CD4-positive, alpha-beta T cell (primary cell): ENCODE measurements at regions of chr1 and their contacts with region 1.

Region 1: DNA sequence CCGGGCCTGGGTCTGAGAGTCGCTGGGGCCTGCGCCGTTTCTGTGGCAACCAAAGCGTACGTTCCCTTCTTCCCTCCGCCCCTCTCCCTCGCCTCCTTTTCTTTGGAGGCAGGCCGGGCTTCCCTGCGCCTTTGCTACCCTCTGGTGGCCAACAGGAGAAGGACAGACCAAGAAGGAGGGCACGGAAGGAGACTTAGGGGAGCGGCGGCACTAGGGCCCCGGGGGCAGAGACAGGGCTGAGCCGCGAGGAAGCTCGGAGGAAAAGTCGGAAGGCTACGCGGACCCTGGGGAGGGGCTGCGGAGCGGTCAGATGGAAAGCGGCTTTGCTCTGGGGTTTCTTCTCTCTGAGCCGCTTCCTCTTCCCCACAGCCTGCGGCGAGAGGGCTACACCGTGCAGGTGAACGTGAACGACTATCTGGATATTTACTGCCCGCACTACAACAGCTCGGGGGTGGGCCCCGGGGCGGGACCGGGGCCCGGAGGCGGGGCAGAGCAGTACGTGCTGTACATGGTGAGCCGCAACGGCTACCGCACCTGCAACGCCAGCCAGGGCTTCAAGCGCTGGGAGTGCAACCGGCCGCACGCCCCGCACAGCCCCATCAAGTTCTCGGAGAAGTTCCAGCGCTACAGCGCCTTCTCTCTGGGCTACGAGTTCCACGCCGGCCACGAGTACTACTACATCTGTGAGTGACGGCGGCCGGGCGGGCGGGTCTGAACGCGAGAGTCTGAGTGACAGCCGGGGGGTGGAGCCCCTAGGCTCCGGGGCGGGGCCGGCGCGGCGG is 6.3 kb downstream of the EFNA3 start:
- DNase-seq: peak; percentile 80 to 95 (median 88)
- ATAC-seq: peak; percentile 75
- H3K4me3 ChIP-seq: peak overlapping the region; percentile 92
- H3K4me3 Mint-ChIP-seq: peak overlapping the region; percentile 89
- H3K27ac ChIP-seq: peak overlapping the region; percentile 65 to 68
- H3K27ac Mint-ChIP-seq: peak overlapping the region; percentile 82
- H3K4me1 ChIP-seq: peaks cover 67% of the 10 kb centered on the region
- H3K4me1 Mint-ChIP-seq: peaks cover 51% of the 10 kb centered on the region
- H3K27me3 ChIP-seq: peaks cover 41 to 46% of the 10 kb centered on the region in 2 experiments
- H3K27me3 Mint-ChIP-seq: peaks cover 36% of the 10 kb centered on the region
- CTCF ChIP-seq: peak; percentile 76

Region 2: DNA sequence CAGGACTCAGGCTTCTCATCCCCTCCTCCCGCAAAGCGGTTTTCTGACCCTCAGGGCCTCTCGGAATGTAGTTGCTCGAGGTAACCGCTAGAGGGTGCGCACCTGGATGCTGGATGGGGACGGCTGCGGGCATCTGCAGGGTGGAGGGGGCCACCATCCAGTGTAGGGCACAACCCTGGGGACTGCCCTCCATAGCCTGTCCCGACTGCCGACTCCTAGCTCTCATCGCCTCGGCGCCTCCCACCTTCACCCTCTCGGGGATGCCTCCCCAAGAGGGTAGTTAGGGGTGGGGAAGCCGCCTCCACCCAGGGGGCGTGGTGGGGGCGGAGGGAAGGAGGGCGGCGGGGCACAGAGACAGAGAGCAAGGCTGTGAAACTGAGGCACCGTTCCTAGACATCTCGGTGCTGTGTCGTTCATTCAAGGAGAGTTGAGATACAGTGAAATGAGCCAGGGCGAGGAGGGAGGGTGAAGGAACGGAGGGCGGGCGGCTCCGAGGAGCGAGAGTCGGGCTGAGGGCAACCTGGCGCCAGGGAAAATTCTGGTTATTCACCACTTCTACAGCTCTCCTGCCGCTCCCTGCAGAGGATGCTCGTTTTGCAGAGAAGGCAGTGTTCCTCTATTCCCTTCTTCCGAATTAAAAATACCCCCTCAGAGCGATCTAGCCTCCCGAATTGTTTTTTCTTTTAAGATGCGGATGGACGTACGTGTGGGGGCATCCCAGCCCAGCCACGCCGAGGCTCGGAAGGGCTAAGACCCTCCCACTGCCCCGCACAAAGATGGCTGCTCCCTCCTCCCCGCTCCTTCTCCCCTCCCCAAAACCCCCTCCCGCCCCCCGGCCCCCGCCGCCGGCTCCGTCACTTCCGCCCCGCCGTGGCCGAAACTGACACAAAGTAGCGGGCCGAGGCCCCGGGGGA is 760.0 kb before region 1 on chr1 and contains the start of gene ATP8B2:
- CTCF ChIA-PET with region 1: no interaction called
- POLR2A ChIA-PET with region 1: no interaction called
- intact Hi-C with region 1: loop called in 1 of 2 experiments (anchors 10 kb)
- DNase-seq: peak; percentile 68 to 90 (median 74)
- ATAC-seq: peak; percentile 57
- H3K4me3 ChIP-seq: peak within 1 kb of the TSS; percentile 70
- H3K4me3 Mint-ChIP-seq: peak within 1 kb of the TSS; percentile 94
- H3K27ac ChIP-seq: peak within 1 kb of the TSS; percentile 80 to 86
- H3K27ac Mint-ChIP-seq: peak within 1 kb of the TSS; percentile 90
- H3K4me1 ChIP-seq: peaks cover 52% of the 10 kb centered on the region
- H3K4me1 Mint-ChIP-seq: peaks cover 36% of the 10 kb centered on the region
- H3K27me3 ChIP-seq: no peaks in the 10 kb centered on the region
- H3K27me3 Mint-ChIP-seq: no peaks in the 10 kb centered on the region
- CTCF ChIP-seq: peak; percentile 95
- total RNA-seq, gene ATP8B2: 72.7 to 80.7 TPM

Region 3: GRCh38 chr1:154558575-154559465 is 526.1 kb before region 1 on chr1 and contains the start of gene UBE2Q1:
- CTCF ChIA-PET with region 1: interaction called, 6 read pairs
- POLR2A ChIA-PET with region 1: interaction called, 3 read pairs
- intact Hi-C with region 1: loop called (anchors 2 to 10 kb)
- DNase-seq: peak; percentile 99 to 100 (median 99)
- ATAC-seq: peak; percentile 87
- H3K4me3 ChIP-seq: peak within 1 kb of the TSS; percentile 87
- H3K4me3 Mint-ChIP-seq: peak within 1 kb of the TSS; percentile 91
- H3K27ac ChIP-seq: peak within 1 kb of the TSS; percentile 64 to 84
- H3K27ac Mint-ChIP-seq: peak within 1 kb of the TSS; percentile 83
- H3K4me1 ChIP-seq: peaks cover 46% of the 10 kb centered on the region
- H3K4me1 Mint-ChIP-seq: peaks cover 42% of the 10 kb centered on the region
- H3K27me3 ChIP-seq: no peaks in the 10 kb centered on the region
- H3K27me3 Mint-ChIP-seq: no peaks in the 10 kb centered on the region
- CTCF ChIP-seq: no peak
- total RNA-seq, gene UBE2Q1: 78.7 to 82.3 TPM

Region 4: GRCh38 chr1:155017041-155017945 is 67.6 kb before region 1 on chr1:
- CTCF ChIA-PET with region 1: interaction called, 11 read pairs
- POLR2A ChIA-PET with region 1: interaction called, 3 read pairs
- intact Hi-C with region 1: no loop called
- DNase-seq: peak; percentile 84 to 95 (median 88)
- ATAC-seq: peak; percentile 86
- H3K4me3 ChIP-seq: peak overlapping the region; percentile 45
- H3K4me3 Mint-ChIP-seq: peak overlapping the region; percentile 67
- H3K27ac ChIP-seq: peak overlapping the region; percentile 73 to 77
- H3K27ac Mint-ChIP-seq: peak overlapping the region; percentile 92
- H3K4me1 ChIP-seq: peaks cover 76% of the 10 kb centered on the region
- H3K4me1 Mint-ChIP-seq: peaks cover 76% of the 10 kb centered on the region
- H3K27me3 ChIP-seq: no peaks in the 10 kb centered on the region
- H3K27me3 Mint-ChIP-seq: no peaks in the 10 kb centered on the region
- CTCF ChIP-seq: peak; percentile 100

Region 5: GRCh38 chr1:155057788-155058211 is 27.1 kb before region 1 on chr1:
- CTCF ChIA-PET with region 1: interaction called, 78 read pairs
- POLR2A ChIA-PET with region 1: interaction called, 23 read pairs
- intact Hi-C with region 1: loop called in 1 of 2 experiments (anchors 1 kb)
- DNase-seq: no peak
- ATAC-seq: no peak
- H3K4me3 ChIP-seq: no peak overlapping the region
- H3K4me3 Mint-ChIP-seq: no peak overlapping the region
- H3K27ac ChIP-seq: no peak overlapping the region
- H3K27ac Mint-ChIP-seq: no peak overlapping the region
- H3K4me1 ChIP-seq: peaks cover 26% of the 10 kb centered on the region
- H3K4me1 Mint-ChIP-seq: peaks cover 20% of the 10 kb centered on the region
- H3K27me3 ChIP-seq: no peaks in the 10 kb centered on the region
- H3K27me3 Mint-ChIP-seq: no peaks in the 10 kb centered on the region
- CTCF ChIP-seq: no peak

Region 6: GRCh38 chr1:155127105-155127964 is 42.4 kb after region 1 on chr1 and contains the start of gene EFNA1:
- CTCF ChIA-PET with region 1: interaction called, 3 read pairs
- POLR2A ChIA-PET with region 1: interaction called, 9 read pairs
- intact Hi-C with region 1: loop called (anchors 2 to 5 kb)
- DNase-seq: peak in 10 of 14 experiments; percentile 18 to 62 (median 46)
- ATAC-seq: peak; percentile 32
- H3K4me3 ChIP-seq: peak within 1 kb of the TSS; percentile 59
- H3K4me3 Mint-ChIP-seq: peak within 1 kb of the TSS; percentile 82
- H3K27ac ChIP-seq: no peak within 1 kb of the TSS
- H3K27ac Mint-ChIP-seq: peak within 1 kb of the TSS; percentile 82
- H3K4me1 ChIP-seq: peaks cover 41% of the 10 kb centered on the region
- H3K4me1 Mint-ChIP-seq: peaks cover 38% of the 10 kb centered on the region
- H3K27me3 ChIP-seq: peaks cover 7 to 15% of the 10 kb centered on the region in 2 experiments
- H3K27me3 Mint-ChIP-seq: peaks cover 29% of the 10 kb centered on the region
- CTCF ChIP-seq: no peak
- total RNA-seq, gene EFNA1: 4.2 to 5.9 TPM